CD14-positive monocyte (primary cell): ENCODE measurements at regions of chr19 and their contacts with region 1.

Region 1: DNA sequence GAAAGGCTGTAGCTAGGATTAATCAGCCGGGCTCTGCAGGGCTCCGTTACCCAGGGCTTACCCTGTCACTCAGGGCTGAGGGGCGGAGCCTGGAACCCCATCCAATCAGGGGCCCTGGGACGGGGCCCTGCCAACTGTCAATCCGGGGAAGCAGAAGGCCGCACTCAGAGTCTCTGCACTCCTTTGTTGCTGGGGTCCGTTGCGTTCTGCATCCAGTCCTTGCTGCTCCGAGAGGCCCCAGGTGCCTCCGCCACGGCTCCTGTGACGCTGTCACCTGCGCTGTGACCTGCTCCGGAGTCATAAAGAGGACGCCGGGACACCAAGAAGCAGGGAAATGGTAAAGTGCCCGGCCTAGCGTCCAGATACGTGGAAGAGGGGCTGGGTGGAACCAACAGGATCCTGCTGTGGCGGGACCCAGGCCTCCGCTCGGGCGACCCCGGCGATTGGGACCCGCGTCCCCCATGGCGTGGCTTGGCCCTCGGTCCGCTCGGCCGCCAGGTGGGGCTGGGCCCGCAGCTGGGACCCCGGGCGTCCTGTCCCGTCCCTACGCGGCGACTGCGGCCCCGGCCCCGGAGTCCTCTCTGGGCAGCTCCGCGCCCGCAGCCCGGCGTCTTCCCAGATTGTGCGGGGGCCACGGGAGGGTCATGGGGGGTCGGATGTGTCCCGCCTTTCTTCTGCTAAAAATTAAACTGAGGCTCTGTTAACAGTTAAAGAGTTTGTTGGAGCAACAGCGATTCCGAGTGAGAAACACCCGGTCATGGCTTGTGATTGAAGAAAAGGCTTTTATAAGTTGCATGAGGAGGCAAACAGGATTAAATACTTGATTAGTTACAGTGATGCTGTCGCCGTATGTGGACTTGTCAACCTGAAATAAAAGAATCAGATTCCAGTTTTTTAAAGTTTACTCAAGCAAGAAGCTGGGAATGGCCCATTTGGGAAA is at the start of gene ZNF491:
- DNase-seq: peak; percentile 71 to 83 (median 75)
- H3K4me3 ChIP-seq: peak within 1 kb of the TSS; percentile 68 to 86 (median 71)
- H3K4me3 Mint-ChIP-seq: peak within 1 kb of the TSS; percentile 92 to 96
- H3K27ac ChIP-seq: peak within 1 kb of the TSS; percentile 23 to 72
- H3K27ac Mint-ChIP-seq: peak within 1 kb of the TSS; percentile 31 to 88 (median 81)
- H3K4me1 ChIP-seq: peaks cover 16 to 22% of the 10 kb centered on the region in 2 donors
- H3K4me1 Mint-ChIP-seq: peaks cover 22% of the 10 kb centered on the region
- H3K27me3 ChIP-seq: no peaks in the 10 kb centered on the region
- H3K27me3 Mint-ChIP-seq: peaks cover 1 to 10% (median 4%) of the 10 kb centered on the region in 3 donors
- CTCF ChIP-seq: no peak
- polyA plus RNA-seq, gene ZNF491: 0.27 to 0.92 TPM in 2 of 3 donors, not detected in the other

Region 2: GRCh38 chr19:11380653-11381534 is 417.8 kb before region 1 on chr19:
- intact Hi-C with region 1: no loop called
- DNase-seq: peak; percentile 91 to 95 (median 92)
- H3K4me3 ChIP-seq: peak overlapping the region; percentile 68 to 87 (median 72)
- H3K4me3 Mint-ChIP-seq: peak overlapping the region; percentile 92 to 100
- H3K27ac ChIP-seq: peak overlapping the region; percentile 81 to 95
- H3K27ac Mint-ChIP-seq: peak overlapping the region; percentile 97 to 100 (median 99)
- H3K4me1 ChIP-seq: peaks cover 69 to 89% of the 10 kb centered on the region in 2 donors
- H3K4me1 Mint-ChIP-seq: peaks cover 57% of the 10 kb centered on the region
- H3K27me3 ChIP-seq: peaks cover 0 to 19% of the 10 kb centered on the region in 2 donors
- H3K27me3 Mint-ChIP-seq: peaks cover 16 to 28% (median 21%) of the 10 kb centered on the region in 3 donors
- CTCF ChIP-seq: peak; percentile 80

Region 3: DNA sequence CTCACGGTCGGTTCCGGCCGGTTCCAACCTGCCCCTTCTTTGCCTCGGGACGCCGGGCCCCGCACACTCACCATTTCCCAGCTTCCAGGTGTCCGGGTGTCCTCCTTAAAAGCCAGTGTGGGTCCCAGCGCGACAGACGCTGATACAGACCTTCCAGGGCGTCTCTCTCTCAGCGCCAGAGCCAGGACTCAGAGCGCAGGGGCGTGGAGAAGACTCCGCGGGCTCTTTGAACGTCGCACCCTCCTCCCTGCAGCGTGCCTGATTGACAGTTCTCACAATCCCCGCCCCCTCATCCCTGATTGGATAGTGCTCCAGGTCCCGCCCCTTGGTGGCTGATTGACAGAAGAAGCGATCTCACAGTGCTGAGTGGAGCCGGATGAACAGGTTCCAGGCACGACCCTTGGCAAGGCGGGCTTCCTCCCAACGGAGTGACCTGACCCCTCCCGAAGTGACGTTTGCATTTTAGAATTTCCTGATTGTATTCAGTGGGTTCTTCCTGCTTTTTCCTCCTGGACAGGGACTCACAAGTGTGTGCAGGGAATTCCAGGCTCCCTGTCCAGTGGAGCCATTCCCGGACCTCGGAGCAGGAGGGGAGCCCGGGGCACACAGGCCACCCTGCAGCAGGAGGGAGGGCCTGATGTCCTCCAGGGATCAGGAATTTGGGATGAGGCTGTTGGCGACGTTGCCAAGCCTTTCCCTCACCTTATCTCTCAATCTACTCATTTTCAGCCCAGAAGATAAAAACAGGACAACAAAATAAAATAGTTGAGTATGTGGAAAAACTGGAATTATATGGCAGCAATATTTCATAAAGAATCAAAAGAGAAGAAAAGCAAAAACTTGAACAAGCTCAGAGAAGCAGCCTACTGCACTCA is 59.7 kb before region 1 on chr19 and contains the start of gene ZNF823:
- intact Hi-C with region 1: loop called in 1 of 2 experiments (anchors 5 kb)
- DNase-seq: peak; percentile 86 to 91 (median 90)
- H3K4me3 ChIP-seq: peak within 1 kb of the TSS; percentile 71 to 83 (median 78)
- H3K4me3 Mint-ChIP-seq: peak within 1 kb of the TSS; percentile 99 to 100
- H3K27ac ChIP-seq: peak within 1 kb of the TSS in 1 of 2 donors; percentile 71
- H3K27ac Mint-ChIP-seq: peak within 1 kb of the TSS; percentile 69 to 94 (median 83)
- H3K4me1 ChIP-seq: peaks cover 19 to 26% of the 10 kb centered on the region in 2 donors
- H3K4me1 Mint-ChIP-seq: peaks cover 28% of the 10 kb centered on the region
- H3K27me3 ChIP-seq: no peaks in the 10 kb centered on the region
- H3K27me3 Mint-ChIP-seq: peaks cover 0 to 3% (median 2%) of the 10 kb centered on the region in 3 donors
- CTCF ChIP-seq: no peak
- polyA plus RNA-seq, gene ZNF823: 0.48 to 0.85 (median 0.67) TPM

Region 4: GRCh38 chr19:11752244-11752736 is 46.4 kb before region 1 on chr19:
- intact Hi-C with region 1: no loop called
- DNase-seq: no peak
- H3K4me3 ChIP-seq: no peak overlapping the region
- H3K4me3 Mint-ChIP-seq: no peak overlapping the region
- H3K27ac ChIP-seq: no peak overlapping the region
- H3K27ac Mint-ChIP-seq: no peak overlapping the region
- H3K4me1 ChIP-seq: no peaks in the 10 kb centered on the region
- H3K4me1 Mint-ChIP-seq: no peaks in the 10 kb centered on the region
- H3K27me3 ChIP-seq: no peaks in the 10 kb centered on the region
- H3K27me3 Mint-ChIP-seq: peaks cover 2 to 6% (median 4%) of the 10 kb centered on the region in 3 donors
- CTCF ChIP-seq: no peak

Region 5: DNA sequence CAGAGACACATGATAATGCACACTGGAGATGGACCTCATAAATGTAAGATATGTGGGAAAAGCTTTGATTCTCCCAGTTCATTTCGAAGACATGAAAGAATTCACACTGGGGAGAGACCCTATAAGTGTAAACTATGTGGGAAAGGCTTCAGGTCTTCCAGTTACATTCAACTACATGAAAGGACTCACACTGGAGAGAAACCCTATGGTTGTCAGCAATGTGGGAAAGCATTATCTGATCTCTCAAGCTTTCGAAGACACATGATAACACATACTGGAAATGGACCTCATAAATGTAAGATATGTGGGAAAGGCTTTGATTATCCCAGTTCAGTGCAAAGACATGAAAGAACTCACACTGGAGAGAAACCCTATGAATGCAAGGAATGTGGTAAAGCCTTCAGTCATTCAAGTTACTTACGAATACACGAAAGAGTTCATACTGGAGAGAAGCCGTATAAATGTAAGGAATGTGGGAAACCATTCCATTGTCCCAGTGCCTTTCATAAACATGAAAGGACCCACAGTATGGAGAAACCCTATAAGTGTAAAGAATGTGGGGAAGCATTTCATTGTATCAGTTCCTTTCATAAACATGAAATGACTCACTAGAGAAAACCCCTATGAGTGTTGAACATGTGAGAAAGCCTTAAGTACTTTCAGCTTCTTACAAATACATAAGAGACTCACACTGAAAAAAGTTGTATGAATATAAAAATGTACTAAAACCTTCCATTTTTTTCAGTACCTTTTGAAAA is 17.2 kb before region 1 on chr19:
- intact Hi-C with region 1: no loop called
- DNase-seq: no peak
- H3K4me3 ChIP-seq: peak overlapping the region in 1 of 3 experiments; percentile 36
- H3K4me3 Mint-ChIP-seq: no peak overlapping the region
- H3K27ac ChIP-seq: no peak overlapping the region
- H3K27ac Mint-ChIP-seq: no peak overlapping the region
- H3K4me1 ChIP-seq: no peaks in the 10 kb centered on the region
- H3K4me1 Mint-ChIP-seq: no peaks in the 10 kb centered on the region
- H3K27me3 ChIP-seq: no peaks in the 10 kb centered on the region
- H3K27me3 Mint-ChIP-seq: peaks cover 0 to 3% (median 0%) of the 10 kb centered on the region in 3 donors
- CTCF ChIP-seq: no peak

Region 6: DNA sequence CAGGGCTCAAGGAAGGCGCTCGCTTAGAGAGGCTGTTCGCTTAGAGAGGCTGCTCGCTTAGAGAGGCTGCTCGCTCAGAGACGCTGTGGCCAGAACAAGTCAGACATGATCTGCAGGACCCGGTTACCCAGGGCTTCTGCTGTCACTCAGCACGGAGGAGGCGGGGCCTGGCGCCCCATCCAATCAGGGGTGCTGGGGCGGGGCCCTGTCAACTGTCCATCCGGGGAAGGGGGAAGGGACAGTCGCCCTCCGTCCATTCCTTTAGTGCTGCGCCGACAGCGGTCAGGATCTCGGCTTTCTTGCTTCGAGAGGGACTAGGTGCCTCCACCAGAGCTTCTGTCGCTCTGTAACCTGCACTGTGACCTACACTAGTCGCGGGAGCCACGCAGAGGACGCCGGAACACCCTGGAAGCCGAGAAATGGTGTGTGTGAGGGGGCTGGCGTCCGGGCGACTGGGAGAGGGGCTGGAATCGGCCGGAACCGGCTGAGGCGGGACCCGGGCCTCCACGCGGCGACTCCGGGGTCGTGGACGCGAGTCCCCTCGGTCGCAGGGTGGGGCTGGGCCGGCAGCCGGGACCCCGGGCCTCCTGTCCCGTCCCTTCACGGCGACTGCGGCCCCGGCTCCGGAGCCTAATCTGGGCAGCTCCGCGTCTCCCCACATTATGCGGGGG is 15.5 kb after region 1 on chr19 and contains the start of gene ZNF440:
- intact Hi-C with region 1: loop called in 1 of 2 experiments (anchors 1 kb)
- DNase-seq: peak; percentile 80 to 89 (median 80)
- H3K4me3 ChIP-seq: peak within 1 kb of the TSS; percentile 71 to 92 (median 84)
- H3K4me3 Mint-ChIP-seq: peak within 1 kb of the TSS; percentile 93 to 95
- H3K27ac ChIP-seq: peak within 1 kb of the TSS; percentile 72 to 80
- H3K27ac Mint-ChIP-seq: peak within 1 kb of the TSS; percentile 81 to 96 (median 89)
- H3K4me1 ChIP-seq: peaks cover 9 to 15% of the 10 kb centered on the region in 2 donors
- H3K4me1 Mint-ChIP-seq: peaks cover 20% of the 10 kb centered on the region
- H3K27me3 ChIP-seq: no peaks in the 10 kb centered on the region
- H3K27me3 Mint-ChIP-seq: peaks cover 0 to 2% (median 0%) of the 10 kb centered on the region in 3 donors
- CTCF ChIP-seq: no peak
- polyA plus RNA-seq, gene ZNF440: 2.4 to 4.1 (median 3.4) TPM

Region 7: GRCh38 chr19:11881151-11881800 is 82.6 kb after region 1 on chr19:
- intact Hi-C with region 1: loop called in 1 of 2 experiments (anchors 5 kb)
- DNase-seq: peak; percentile 36 to 66 (median 57)
- H3K4me3 ChIP-seq: no peak overlapping the region
- H3K4me3 Mint-ChIP-seq: no peak overlapping the region
- H3K27ac ChIP-seq: no peak overlapping the region
- H3K27ac Mint-ChIP-seq: peak overlapping the region in 1 of 7 donors; percentile 60
- H3K4me1 ChIP-seq: no peaks in the 10 kb centered on the region
- H3K4me1 Mint-ChIP-seq: peaks cover 2% of the 10 kb centered on the region
- H3K27me3 ChIP-seq: no peaks in the 10 kb centered on the region
- H3K27me3 Mint-ChIP-seq: peaks cover 2 to 9% (median 2%) of the 10 kb centered on the region in 3 donors
- CTCF ChIP-seq: peak; percentile 70

Region 8: DNA sequence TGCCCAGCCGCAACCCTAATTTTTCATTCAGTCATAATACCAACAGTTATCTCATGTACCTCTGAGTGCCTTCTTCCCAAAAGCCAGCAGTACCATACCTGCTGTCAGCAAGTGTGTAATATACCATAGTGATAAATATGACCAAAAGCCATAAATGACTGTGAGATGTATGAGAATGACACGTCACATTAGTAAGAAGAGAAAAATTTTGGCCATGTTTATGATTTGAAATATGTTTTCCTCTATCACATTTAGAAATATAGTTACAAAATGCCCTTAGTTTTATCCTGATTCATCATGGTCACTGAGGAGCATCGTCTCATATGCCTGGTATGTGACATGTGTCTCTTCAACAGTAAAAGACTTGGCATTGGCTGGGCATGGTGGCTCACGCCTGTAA is 115.0 kb after region 1 on chr19:
- intact Hi-C with region 1: no loop called
- DNase-seq: no peak
- H3K4me3 ChIP-seq: no peak overlapping the region
- H3K4me3 Mint-ChIP-seq: no peak overlapping the region
- H3K27ac ChIP-seq: no peak overlapping the region
- H3K27ac Mint-ChIP-seq: no peak overlapping the region
- H3K4me1 ChIP-seq: no peaks in the 10 kb centered on the region
- H3K4me1 Mint-ChIP-seq: no peaks in the 10 kb centered on the region
- H3K27me3 ChIP-seq: no peaks in the 10 kb centered on the region
- H3K27me3 Mint-ChIP-seq: no peaks in the 10 kb centered on the region
- CTCF ChIP-seq: no peak